ENCODE measurements at regions of chr3 and their contacts with region 1.

Region 1: GRCh38 chr3:149042789-149043386 is 43.4 kb downstream of the HLTF start:
- DNase-seq: peak; percentile 72
- H3K4me3 ChIP-seq: no peak overlapping the region
- H3K27ac ChIP-seq: peak overlapping the region; percentile 50
- H3K4me1 ChIP-seq: peaks cover 14% of the 10 kb centered on the region
- H3K27me3 ChIP-seq: no peaks in the 10 kb centered on the region
- CTCF ChIP-seq: no peak
- POLR2A ChIP-seq: no peak

Region 2: GRCh38 chr3:149023951-149024350 is 18.9 kb before region 1 on chr3:
- CTCF ChIA-PET with region 1: interaction called, 10 read pairs
- POLR2A ChIA-PET with region 1: no interaction called
- dilution Hi-C with region 1: no loop called
- intact Hi-C with region 1: no loop called
- DNase-seq: no peak
- H3K4me3 ChIP-seq: no peak overlapping the region
- H3K27ac ChIP-seq: no peak overlapping the region
- H3K4me1 ChIP-seq: no peaks in the 10 kb centered on the region
- H3K27me3 ChIP-seq: no peaks in the 10 kb centered on the region
- CTCF ChIP-seq: no peak
- POLR2A ChIP-seq: no peak

Measured in endothelial cell of umbilical vein (primary cell).